Activated naive CD4-positive, alpha-beta T cell treated with anti-CD3 and anti-CD28 coated beads, Interleukin-2, amount 10 ng/mL, durations not matched to agents 7 days and 5 days (primary cell): ENCODE measurements at regions of chr12 and their contacts with region 1.

Region 1: GRCh38 chr12:52032804-52033502 is 18.3 kb upstream of the NR4A1 start:
- DNase-seq: peak; percentile 96
- H3K4me3 Mint-ChIP-seq: peak overlapping the region; percentile 72
- H3K27ac Mint-ChIP-seq: peak overlapping the region; percentile 17
- H3K4me1 Mint-ChIP-seq: peaks cover 36% of the 10 kb centered on the region
- H3K27me3 Mint-ChIP-seq: peaks cover 66% of the 10 kb centered on the region

Region 2: DNA sequence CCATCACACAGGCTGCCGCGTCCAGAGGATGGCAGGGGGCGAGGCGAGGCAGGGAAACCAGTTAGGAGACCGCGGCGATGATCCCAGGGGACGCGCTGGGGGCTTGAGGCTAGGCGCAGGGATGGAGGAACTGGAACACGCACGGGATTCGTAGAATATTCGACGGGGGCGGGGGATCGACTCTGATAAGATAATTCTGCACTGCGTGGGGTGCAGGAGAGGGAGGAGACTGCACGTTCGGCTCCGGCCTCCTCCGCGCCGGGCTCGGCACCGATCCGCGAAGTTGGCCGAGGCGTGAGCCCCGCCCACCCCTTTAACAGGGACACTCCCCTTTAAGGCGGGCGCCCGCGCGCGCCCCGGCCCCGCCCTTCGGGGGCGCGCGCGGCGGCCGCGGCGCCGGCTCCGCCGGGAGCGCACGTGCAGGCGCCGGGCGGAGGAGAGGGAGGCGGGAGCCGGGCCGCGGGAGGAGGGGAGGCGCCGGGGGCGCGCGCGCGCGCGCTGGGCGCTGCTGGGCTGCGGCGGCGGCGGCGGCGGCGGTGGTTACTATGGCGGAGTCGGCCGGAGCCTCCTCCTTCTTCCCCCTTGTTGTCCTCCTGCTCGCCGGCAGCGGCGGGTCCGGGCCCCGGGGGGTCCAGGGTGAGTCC is 81.6 kb before region 1 on chr12 and contains the start of gene ACVR1B:
- CTCF ChIA-PET with region 1: no interaction called
- DNase-seq: peak; percentile 92
- H3K4me3 Mint-ChIP-seq: peak within 1 kb of the TSS; percentile 94
- H3K27ac Mint-ChIP-seq: peak within 1 kb of the TSS; percentile 77
- H3K4me1 Mint-ChIP-seq: peaks cover 24% of the 10 kb centered on the region
- H3K27me3 Mint-ChIP-seq: peaks cover 66% of the 10 kb centered on the region

Region 3: DNA sequence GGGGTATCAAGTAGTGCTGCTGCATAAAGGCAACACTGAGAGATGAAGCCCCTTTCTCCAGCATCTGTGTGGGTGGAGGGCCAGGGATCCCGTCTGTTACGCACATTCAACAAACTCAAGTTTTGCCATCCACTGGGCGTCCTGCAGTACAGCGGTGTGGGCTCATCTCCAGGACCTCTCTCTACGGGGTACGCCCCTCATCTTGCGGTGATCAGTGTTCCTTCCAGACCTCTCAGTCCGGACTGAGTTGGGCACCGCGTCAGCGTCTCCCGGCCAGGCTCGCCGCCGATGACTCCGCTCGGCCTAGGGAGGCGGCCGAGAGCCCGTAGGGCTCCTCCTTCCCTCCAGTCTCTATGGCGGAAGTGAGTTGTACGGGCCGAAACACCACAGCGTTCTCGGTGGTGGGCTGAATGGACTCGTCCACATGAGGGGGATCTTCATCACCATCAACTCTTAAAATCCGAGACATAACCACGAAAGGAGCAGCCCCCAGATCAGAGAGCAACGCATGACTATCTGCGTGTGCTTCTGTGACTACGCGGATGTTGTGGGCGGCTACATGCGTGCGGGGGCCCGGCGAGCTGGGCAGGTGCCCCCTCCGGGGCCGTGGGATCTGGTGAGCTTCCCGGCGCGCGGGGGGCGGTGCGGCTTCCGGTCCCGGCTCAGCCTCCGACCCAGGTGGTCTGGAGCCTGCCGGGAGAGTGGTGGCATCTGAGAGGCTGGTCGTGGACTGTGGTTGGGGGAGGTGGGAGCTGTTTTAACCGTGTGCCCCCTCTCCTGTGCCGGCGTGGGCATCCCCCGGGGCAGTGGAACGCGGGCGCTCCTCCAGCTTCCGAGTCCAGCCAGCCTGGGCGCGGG is 36.6 kb after region 1 on chr12 and contains the start of gene ATG101:
- CTCF ChIA-PET with region 1: interaction called, 637 read pairs
- DNase-seq: peak; percentile 90
- H3K4me3 Mint-ChIP-seq: peak within 1 kb of the TSS; percentile 90
- H3K27ac Mint-ChIP-seq: peak within 1 kb of the TSS; percentile 95
- H3K4me1 Mint-ChIP-seq: peaks cover 47% of the 10 kb centered on the region
- H3K27me3 Mint-ChIP-seq: peaks cover 35% of the 10 kb centered on the region

Region 4: DNA sequence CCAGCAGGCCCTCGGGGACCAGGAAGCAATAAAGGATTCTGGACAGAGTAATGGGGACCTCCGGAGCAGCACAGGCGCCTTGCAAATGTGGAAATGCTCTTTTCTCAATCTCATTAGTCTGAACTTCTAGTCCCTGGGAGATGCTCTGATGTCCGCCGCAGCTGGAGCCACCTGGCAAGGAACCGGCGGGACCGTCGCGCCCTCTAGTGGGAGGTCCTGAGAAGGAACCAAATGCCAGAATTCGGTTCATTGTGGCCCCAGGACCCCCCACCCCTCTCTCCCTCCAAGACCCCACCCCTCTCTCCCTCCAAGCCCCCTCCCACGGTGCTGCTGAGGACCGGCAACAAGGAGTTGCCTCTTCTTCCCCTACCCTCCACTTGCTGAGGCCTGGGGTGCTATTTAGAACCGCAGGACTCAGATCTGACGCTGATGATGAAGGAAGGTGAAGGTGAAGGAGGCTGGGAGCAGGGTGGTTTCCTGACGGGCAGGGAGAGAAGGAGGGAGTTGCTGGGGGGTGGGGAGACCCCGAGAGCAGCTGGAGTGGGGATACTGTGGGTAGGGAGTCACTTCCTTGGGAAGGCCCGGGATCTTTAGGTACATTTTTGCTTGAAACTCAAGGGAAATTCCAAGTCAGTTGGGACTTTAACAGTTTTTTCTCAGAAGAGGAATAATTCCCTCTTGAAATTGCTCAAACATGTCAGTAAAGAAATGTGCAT is 89.0 kb after region 1 on chr12:
- CTCF ChIA-PET with region 1: interaction called, 94 read pairs
- DNase-seq: peak; percentile 79
- H3K4me3 Mint-ChIP-seq: no peak overlapping the region
- H3K27ac Mint-ChIP-seq: no peak overlapping the region
- H3K4me1 Mint-ChIP-seq: peaks cover 13% of the 10 kb centered on the region
- H3K27me3 Mint-ChIP-seq: peaks cover 81% of the 10 kb centered on the region